Activated T-helper 1 cell treated with anti-CD3 and anti-CD28 coated beads, Interleukin-12 subunit alpha, Interleukin-12 subunit beta, Interleukin-2, Interleukin-4 antibody, amounts not matched to agents 30 ng/mL and 10 ng/mL and 1 ng/mL, durations not matched to agents 14 hours and 24 hours and 36 hours (primary cell): ENCODE measurements at regions of chr5 and their contacts with region 1.

Region 1: DNA sequence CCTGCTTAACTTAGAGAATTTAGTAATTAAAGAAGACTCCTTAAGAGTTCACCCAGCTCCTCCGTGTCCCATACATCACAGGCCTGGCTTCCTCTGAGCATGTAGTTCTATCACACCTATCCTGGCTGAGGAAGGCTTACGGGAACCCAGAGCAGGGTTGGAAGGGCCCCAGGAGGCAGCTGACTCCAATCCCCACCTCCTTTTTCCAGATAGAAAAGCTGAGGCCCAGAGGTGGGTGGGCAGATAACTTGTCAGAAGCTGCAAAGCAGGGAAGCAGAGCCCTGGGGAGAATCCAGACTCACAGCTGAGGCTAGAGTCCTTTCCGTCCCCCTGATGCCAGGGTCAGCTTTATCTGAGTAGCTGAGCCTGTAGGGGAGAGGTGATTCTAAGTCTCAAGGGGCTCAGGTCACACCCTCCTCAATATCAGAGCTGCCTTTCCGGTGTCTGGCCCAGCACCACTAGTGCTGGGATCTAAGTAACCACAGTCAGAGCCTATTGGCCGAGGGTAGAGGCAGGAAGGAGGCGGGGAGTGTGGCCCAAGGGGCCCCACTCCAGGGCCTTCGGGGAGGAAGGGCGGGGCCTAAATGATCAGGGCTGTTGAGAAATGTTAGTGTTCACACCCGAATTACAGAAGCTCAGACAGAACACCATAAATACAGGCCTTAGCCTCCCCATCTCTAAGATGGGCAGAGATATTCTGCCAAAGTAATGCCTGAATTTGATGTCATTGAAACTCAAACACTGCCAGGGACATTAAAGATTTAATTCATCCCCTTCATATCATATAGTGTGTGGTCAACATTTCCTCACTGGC is 9.9 kb downstream of the CCDC69 start:
- DNase-seq: peak; percentile 83
- H3K4me3 Mint-ChIP-seq: peak overlapping the region; percentile 87
- H3K27ac Mint-ChIP-seq: peak overlapping the region; percentile 93
- H3K4me1 Mint-ChIP-seq: peaks cover 81% of the 10 kb centered on the region
- H3K27me3 Mint-ChIP-seq: no peaks in the 10 kb centered on the region

Region 2: GRCh38 chr5:150789943-150790611 is 423.9 kb before region 1 on chr5:
- intact Hi-C with region 1: loop called (anchors 5 kb)
- DNase-seq: peak; percentile 63
- H3K4me3 Mint-ChIP-seq: peak overlapping the region; percentile 78
- H3K27ac Mint-ChIP-seq: peak overlapping the region; percentile 87
- H3K4me1 Mint-ChIP-seq: peaks cover 59% of the 10 kb centered on the region
- H3K27me3 Mint-ChIP-seq: no peaks in the 10 kb centered on the region

Region 3: GRCh38 chr5:151157426-151158286 is 56.4 kb before region 1 on chr5 and contains the start of gene ANXA6:
- intact Hi-C with region 1: loop called (anchors 1 kb)
- DNase-seq: peak; percentile 66
- H3K4me3 Mint-ChIP-seq: peak within 1 kb of the TSS; percentile 94
- H3K27ac Mint-ChIP-seq: peak within 1 kb of the TSS; percentile 92
- H3K4me1 Mint-ChIP-seq: peaks cover 58% of the 10 kb centered on the region
- H3K27me3 Mint-ChIP-seq: peaks cover 2% of the 10 kb centered on the region
- total RNA-seq, gene ANXA6: 286 and 301 TPM in 2 replicates

Region 4: DNA sequence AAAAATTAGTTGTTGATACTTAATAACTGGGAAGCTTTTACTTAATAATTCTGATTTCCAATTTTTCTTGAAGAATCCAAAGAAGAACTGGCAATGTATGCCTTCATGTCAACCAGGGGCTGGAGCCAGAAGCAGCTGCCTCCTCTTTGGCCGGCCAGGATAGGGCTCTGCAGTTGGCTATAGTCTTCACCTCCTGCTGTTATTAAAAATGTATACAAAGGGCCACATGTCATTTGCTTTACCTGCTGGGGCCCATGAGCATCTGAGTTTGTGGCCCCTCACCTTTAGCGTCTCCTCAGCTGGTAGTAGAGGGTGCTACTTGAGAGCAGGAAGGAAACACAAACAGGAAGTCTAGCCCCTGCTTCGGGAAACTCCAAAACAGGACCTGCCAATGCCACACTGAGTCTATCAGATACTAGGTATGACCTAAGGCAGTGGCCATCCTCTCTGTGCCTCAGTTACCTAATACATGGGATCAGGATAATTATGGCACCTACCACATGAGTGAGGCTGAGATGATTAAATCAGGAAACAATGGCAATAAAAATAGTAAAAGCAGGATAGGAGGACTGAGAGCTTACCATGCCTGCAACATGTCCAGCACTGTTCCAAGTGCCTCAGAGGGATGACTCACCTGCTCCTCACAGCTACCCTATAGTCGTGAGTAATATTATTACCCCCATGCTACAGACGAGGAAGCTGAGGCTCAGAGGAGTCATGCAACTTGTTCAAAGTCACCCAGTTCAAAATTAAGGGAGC is 11.4 kb before region 1 on chr5:
- intact Hi-C with region 1: loop called (anchors 1 kb)
- DNase-seq: no peak
- H3K4me3 Mint-ChIP-seq: no peak overlapping the region
- H3K27ac Mint-ChIP-seq: peak overlapping the region; percentile 72
- H3K4me1 Mint-ChIP-seq: peaks cover 54% of the 10 kb centered on the region
- H3K27me3 Mint-ChIP-seq: no peaks in the 10 kb centered on the region

Region 5: GRCh38 chr5:151270599-151270998 is 56.6 kb after region 1 on chr5:
- intact Hi-C with region 1: loop called (anchors 1 kb)
- DNase-seq: peak; percentile 12
- H3K4me3 Mint-ChIP-seq: no peak overlapping the region
- H3K27ac Mint-ChIP-seq: no peak overlapping the region
- H3K4me1 Mint-ChIP-seq: no peaks in the 10 kb centered on the region
- H3K27me3 Mint-ChIP-seq: peaks cover 2% of the 10 kb centered on the region

Region 6: DNA sequence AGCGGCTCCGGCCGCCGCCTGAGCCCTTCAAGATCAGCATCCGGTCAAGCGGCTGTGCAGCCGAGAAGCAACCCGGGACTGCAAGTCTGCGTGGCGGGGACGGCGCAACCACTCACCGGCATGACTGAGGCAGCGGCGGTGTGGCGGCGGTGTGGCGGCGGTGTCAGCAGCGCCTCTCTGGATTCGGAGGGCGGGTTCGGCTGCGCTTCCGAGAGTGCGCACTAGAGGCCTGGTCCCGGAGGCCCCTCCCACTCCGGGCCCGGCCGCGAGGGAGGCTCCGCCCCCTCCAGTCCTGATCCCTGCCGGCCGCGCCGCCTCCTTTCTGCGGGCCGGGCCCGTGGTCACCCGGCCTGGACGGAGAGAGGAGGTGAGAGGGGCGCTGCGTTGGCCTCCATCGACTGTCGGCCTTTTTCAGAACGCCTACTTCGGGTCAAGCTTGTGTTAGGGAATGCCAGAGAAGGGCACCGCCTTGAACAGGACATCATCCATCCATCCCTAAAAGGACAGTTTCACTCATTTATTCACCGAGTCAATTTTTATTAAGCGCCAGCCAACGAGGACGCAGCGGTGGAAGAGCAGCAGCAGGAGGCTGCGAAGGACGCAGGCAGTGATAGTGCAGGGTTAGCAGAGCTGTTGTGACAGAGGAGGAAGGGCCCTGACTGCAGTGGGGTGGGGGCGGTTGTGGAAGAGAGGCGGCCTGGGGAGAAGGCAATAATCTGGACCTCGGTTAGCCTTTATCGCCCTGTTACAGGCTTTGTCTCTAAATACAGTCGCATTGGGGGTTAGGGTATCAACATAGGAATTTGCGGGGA is 544.6 kb after region 1 on chr5 and contains the start of gene ATOX1:
- intact Hi-C with region 1: loop called (anchors 5 kb)
- DNase-seq: peak; percentile 90
- H3K4me3 Mint-ChIP-seq: peak within 1 kb of the TSS; percentile 87
- H3K27ac Mint-ChIP-seq: peak within 1 kb of the TSS; percentile 92
- H3K4me1 Mint-ChIP-seq: peaks cover 43% of the 10 kb centered on the region
- H3K27me3 Mint-ChIP-seq: no peaks in the 10 kb centered on the region
- total RNA-seq, gene ATOX1: 72.5 and 83.7 TPM in 2 replicates

Region 7: GRCh38 chr5:152136918-152137462 is 923.0 kb after region 1 on chr5:
- intact Hi-C with region 1: no loop called
- DNase-seq: no peak
- H3K4me3 Mint-ChIP-seq: no peak overlapping the region
- H3K27ac Mint-ChIP-seq: no peak overlapping the region
- H3K4me1 Mint-ChIP-seq: no peaks in the 10 kb centered on the region
- H3K27me3 Mint-ChIP-seq: peaks cover 7% of the 10 kb centered on the region